Right cardiac atrium (tissue), 5 donors: ENCODE measurements at regions of chr3 and their contacts with region 1.

Region 1: DNA sequence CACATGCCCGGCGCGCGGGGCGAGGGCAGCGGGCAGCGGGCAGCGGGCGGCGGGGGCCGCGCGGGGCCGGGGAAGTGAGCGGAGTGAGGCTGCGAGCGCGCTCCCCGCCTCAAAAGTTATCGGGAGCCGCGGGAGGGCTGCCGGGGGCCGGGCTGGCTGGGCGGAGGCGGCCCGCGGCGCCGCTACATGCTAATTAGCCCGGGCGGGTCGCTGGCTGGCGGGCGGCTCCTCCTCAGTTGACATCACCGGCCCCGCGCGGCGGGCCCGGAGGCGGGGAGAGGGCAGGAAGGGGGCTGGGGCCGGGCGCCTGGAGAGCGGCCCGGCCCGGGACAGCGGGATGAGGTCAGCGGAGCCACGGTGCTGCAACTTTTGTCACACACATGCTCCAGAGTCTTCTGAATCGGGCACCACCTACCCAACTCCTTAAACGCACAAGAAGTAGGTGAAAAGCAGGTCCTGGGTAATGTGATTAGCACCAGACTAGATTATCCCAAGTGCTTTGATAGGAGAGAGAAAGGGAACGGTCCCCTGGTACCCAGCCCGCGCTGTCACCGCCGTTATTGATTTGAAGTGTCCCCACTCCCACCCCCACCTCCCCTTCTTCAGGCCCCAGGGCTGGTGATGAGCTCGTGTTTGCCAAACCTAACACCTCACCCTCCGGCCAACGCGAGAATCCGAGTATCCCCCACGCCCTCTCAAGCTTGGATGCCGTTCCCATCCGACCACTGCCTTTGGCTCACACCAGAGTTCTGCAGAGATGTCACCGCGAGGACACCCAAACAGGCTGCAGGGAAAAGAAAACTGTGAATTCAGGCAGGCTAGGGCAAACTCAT is at the start of gene HEG1:
- DNase-seq: peak; percentile 95 to 98 (median 98)
- ATAC-seq: peak; percentile 93 to 94
- H3K4me3 ChIP-seq: peak within 1 kb of the TSS; percentile 99
- H3K27ac ChIP-seq: peak within 1 kb of the TSS; percentile 97
- H3K4me1 ChIP-seq: peaks cover 36% of the 10 kb centered on the region
- H3K27me3 ChIP-seq: no peaks in the 10 kb centered on the region
- total RNA-seq, gene HEG1: 130 to 193 (median 151) TPM

Region 2: GRCh38 chr3:124761250-124761796 is 294.8 kb before region 1 on chr3:
- intact Hi-C with region 1: no loop called
- DNase-seq: peak; percentile 91 to 96 (median 94)
- ATAC-seq: peak; percentile 91 to 93
- H3K4me3 ChIP-seq: no peak overlapping the region
- H3K27ac ChIP-seq: peak overlapping the region; percentile 40
- H3K4me1 ChIP-seq: peaks cover 2% of the 10 kb centered on the region
- H3K27me3 ChIP-seq: no peaks in the 10 kb centered on the region

Region 3: GRCh38 chr3:125003369-125003853 is 52.7 kb before region 1 on chr3:
- intact Hi-C with region 1: loop called in 1 of 4 experiments (anchors 5 kb)
- DNase-seq: peak; percentile 62 to 87 (median 82)
- ATAC-seq: peak; percentile 84 to 91
- H3K4me3 ChIP-seq: no peak overlapping the region
- H3K27ac ChIP-seq: peak overlapping the region; percentile 14
- H3K4me1 ChIP-seq: peaks cover 13% of the 10 kb centered on the region
- H3K27me3 ChIP-seq: no peaks in the 10 kb centered on the region

Region 4: GRCh38 chr3:125019271-125019670 is 36.9 kb before region 1 on chr3:
- intact Hi-C with region 1: loop called in 1 of 4 experiments (anchors 5 kb)
- DNase-seq: no peak
- ATAC-seq: no peak
- H3K4me3 ChIP-seq: no peak overlapping the region
- H3K27ac ChIP-seq: no peak overlapping the region
- H3K4me1 ChIP-seq: peaks cover 7% of the 10 kb centered on the region
- H3K27me3 ChIP-seq: no peaks in the 10 kb centered on the region

Region 5: DNA sequence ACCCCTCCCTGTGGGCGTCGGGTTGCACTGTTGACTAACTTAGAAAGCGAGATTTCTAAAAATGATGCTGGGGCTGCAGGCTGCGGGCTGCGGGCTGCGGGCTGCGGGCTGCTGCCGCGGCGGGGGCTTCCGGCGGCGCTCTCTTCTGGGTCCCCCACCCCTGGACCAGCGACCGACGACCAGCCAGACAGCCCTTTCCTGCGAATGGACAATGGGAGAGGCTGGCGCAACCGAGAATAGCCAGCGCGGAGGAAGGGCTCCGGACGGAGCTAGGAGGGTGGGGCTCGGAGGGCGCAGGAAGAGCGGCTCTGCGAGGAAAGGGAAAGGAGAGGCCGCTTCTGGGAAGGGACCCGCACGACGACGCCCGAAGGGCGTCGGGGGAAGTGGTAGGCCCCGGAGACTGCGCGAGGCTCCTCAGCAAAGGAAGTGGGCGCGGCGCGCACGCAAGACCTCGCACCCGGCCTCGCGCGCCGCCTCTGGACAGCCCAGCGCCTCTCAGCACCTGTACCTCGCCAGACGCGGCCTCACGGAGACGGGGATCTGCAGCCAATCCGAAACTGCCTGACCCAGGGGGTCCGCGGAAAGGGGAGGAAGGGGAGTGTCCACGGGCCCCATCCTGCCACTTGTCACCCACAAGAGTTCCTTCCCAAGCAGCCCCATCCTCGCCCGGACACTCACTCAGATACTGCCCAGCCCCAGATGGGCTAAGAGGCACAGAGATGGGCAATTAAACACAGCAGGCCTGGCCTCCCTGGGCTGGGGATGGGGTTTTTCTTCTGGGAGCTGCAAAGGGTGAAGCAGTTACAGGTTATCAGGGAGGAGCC is 85.7 kb after region 1 on chr3:
- intact Hi-C with region 1: loop called in 3 of 4 experiments (anchors 5 to 10 kb)
- DNase-seq: peak; percentile 83 to 92 (median 92)
- ATAC-seq: peak; percentile 86 to 87
- H3K4me3 ChIP-seq: peak overlapping the region; percentile 23
- H3K27ac ChIP-seq: peak overlapping the region; percentile 62
- H3K4me1 ChIP-seq: peaks cover 20% of the 10 kb centered on the region
- H3K27me3 ChIP-seq: no peaks in the 10 kb centered on the region

Region 6: GRCh38 chr3:125165189-125165947 is 109.2 kb after region 1 on chr3:
- intact Hi-C with region 1: loop called in 1 of 4 experiments (anchors 5 kb)
- DNase-seq: peak in 2 of 3 donors; percentile 81
- ATAC-seq: peak; percentile 79 to 83
- H3K4me3 ChIP-seq: no peak overlapping the region
- H3K27ac ChIP-seq: no peak overlapping the region
- H3K4me1 ChIP-seq: peaks cover 6% of the 10 kb centered on the region
- H3K27me3 ChIP-seq: no peaks in the 10 kb centered on the region